ENCODE measurements at regions of chr12 and their contacts with region 1.

Region 1: DNA sequence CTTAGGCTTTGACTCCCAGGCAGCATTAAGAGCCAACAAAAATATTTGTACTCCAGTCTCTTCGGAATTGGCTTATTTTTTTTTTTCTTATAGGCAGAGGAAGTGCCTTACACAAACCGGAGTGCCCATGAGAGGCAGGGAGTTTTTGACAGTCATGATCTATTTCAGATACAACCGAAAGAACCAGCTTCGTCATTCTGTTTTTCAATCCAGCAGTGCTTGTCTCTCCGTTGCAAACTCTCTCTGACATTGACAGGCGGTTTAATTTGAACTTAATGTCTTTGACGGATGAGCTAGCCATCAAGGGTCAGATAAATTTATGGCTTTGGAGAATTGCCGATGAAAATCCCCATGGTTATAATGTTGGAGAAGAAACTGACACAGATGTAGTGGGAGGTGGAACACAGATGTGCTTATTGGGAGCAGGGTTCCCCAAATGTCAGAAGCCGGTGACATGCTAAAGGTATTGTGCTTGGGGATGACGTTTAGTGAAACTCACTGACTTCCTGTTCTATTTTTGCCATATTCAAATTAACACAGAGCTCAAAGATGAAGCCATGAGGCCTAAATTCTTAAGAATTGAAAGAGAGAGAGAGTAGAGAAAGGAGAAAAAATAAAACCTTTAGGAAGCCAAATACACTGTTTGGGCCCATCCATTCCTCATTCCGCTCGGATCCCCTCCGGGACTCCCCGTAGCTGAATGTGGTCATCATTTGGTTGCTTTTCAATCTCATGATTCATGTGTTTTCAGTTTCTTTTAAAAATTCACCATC is 59.7 kb downstream of the PLXNC1 start:
- DNase-seq: peak; percentile 67
- H3K4me3 Mint-ChIP-seq: peak overlapping the region; percentile 70
- H3K27ac Mint-ChIP-seq: peak overlapping the region; percentile 97
- H3K4me1 Mint-ChIP-seq: peaks cover 62% of the 10 kb centered on the region
- H3K27me3 Mint-ChIP-seq: no peaks in the 10 kb centered on the region

Region 2: DNA sequence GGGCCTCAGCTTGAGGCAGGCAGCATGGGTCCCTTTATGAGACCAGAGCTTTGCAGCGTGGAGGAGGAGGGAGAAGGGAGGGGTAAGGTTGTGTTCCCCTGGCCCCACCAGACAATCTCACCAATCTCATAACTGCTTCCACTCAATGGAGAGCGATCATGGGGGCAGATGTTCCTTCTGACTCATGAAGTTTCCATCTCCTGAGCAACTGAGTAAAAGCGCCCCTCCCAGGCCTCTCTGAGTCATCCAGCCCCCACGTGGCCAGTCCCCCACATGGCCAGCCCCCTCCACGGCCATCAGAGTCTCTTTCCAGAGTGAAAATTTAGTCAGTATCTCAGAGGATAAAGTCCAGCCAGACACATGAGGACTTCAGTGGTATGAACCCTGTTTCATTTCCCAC is 98.9 kb before region 1 on chr12:
- CTCF ChIA-PET with region 1: no interaction called
- intact Hi-C with region 1: no loop called
- DNase-seq: peak; percentile 62
- H3K4me3 Mint-ChIP-seq: no peak overlapping the region
- H3K27ac Mint-ChIP-seq: no peak overlapping the region
- H3K4me1 Mint-ChIP-seq: peaks cover 12% of the 10 kb centered on the region
- H3K27me3 Mint-ChIP-seq: no peaks in the 10 kb centered on the region

Region 3: DNA sequence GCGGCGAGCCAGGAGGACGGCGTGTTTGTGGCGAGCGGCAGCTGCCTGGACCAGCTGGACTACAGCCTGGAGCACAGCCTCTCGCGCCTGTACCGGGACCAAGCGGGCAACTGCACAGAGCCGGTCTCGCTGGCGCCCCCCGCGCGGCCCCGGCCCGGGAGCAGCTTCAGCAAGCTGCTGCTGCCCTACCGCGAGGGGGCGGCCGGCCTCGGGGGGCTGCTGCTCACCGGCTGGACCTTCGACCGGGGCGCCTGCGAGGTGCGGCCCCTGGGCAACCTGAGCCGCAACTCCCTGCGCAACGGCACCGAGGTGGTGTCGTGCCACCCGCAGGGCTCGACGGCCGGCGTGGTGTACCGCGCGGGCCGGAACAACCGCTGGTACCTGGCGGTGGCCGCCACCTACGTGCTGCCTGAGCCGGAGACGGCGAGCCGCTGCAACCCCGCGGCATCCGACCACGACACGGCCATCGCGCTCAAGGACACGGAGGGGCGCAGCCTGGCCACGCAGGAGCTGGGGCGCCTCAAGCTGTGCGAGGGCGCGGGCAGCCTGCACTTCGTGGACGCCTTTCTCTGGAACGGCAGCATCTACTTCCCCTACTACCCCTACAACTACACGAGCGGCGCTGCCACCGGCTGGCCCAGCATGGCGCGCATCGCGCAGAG is 58.8 kb before region 1 on chr12:
- CTCF ChIA-PET with region 1: interaction called, 4 read pairs
- intact Hi-C with region 1: loop called (anchors 1 kb)
- DNase-seq: peak; percentile 42
- H3K4me3 Mint-ChIP-seq: peak overlapping the region; percentile 80
- H3K27ac Mint-ChIP-seq: no peak overlapping the region
- H3K4me1 Mint-ChIP-seq: peaks cover 23% of the 10 kb centered on the region
- H3K27me3 Mint-ChIP-seq: peaks cover 9% of the 10 kb centered on the region

Region 4: DNA sequence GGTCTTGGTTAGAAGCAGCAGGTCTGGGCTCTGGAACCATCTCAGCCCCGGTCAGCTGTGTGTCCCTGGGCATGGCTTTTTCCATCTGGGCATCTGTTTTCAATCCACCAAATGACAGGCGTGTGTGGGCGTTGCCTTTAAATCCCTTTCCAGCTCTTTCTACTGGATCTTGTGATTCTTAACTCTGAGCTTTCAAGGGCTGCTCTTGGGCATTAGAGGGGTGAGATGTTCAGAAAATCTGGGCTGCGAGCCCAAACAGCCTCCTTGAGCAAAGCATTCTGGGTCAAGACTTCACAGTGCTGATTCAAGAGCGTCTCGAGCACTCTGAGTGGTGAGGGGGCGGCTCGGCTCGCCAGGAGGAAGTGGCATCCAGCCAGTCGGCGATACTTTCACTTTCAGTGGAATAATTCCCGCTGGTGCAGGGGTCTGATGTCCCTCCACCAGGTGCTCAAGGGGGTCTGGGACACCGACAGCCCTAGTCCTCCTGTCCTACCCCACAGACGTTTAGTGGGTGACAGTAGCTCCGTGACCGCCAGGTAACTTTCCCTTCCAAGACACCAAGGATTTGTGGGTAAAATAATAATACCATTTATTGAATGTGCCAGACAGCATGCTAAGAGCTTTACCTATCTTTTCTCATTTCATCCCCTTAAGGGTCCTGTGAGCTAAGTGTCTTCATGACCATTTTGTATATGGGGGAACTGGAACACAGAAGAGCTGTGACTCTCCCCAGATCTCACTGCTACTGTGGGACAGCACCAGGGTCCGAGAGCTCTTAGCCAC is 54.4 kb after region 1 on chr12:
- CTCF ChIA-PET with region 1: interaction called, 5 read pairs
- intact Hi-C with region 1: loop called (anchors 1 kb)
- DNase-seq: peak; percentile 83
- H3K4me3 Mint-ChIP-seq: peak overlapping the region; percentile 89
- H3K27ac Mint-ChIP-seq: peak overlapping the region; percentile 96
- H3K4me1 Mint-ChIP-seq: peaks cover 31% of the 10 kb centered on the region
- H3K27me3 Mint-ChIP-seq: no peaks in the 10 kb centered on the region

Region 5: DNA sequence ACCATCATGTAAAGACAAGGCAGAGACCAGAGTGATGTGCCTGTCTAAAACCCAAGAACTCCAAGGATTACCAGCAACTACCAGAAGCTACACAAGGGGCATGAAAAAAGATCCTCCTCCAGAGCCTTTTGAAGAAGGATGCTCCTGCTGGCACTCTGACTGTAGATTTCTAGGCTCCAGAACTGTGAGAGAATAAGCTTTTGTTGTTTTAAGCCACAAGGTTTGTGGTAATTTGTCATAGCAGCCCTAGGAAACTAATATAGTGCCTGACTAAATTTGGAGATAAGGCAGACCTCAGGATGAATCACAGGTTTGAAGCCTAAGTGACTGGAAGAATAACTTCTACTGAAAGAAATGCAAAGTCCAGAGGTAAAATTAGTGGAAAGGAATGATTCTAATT is 118.7 kb after region 1 on chr12:
- CTCF ChIA-PET with region 1: no interaction called
- intact Hi-C with region 1: loop called (anchors 1 kb)
- DNase-seq: no peak
- H3K4me3 Mint-ChIP-seq: no peak overlapping the region
- H3K27ac Mint-ChIP-seq: no peak overlapping the region
- H3K4me1 Mint-ChIP-seq: peaks cover 9% of the 10 kb centered on the region
- H3K27me3 Mint-ChIP-seq: no peaks in the 10 kb centered on the region

Region 6: GRCh38 chr12:94459728-94460615 is 251.9 kb after region 1 on chr12 and contains the start of gene CEP83:
- CTCF ChIA-PET with region 1: no interaction called
- intact Hi-C with region 1: loop called (anchors 1 kb)
- DNase-seq: peak; percentile 98
- H3K4me3 Mint-ChIP-seq: peak within 1 kb of the TSS; percentile 97
- H3K27ac Mint-ChIP-seq: peak within 1 kb of the TSS; percentile 91
- H3K4me1 Mint-ChIP-seq: peaks cover 29% of the 10 kb centered on the region
- H3K27me3 Mint-ChIP-seq: peaks cover 5% of the 10 kb centered on the region
- total RNA-seq, gene CEP83: 19.0 to 21.5 TPM

Region 7: DNA sequence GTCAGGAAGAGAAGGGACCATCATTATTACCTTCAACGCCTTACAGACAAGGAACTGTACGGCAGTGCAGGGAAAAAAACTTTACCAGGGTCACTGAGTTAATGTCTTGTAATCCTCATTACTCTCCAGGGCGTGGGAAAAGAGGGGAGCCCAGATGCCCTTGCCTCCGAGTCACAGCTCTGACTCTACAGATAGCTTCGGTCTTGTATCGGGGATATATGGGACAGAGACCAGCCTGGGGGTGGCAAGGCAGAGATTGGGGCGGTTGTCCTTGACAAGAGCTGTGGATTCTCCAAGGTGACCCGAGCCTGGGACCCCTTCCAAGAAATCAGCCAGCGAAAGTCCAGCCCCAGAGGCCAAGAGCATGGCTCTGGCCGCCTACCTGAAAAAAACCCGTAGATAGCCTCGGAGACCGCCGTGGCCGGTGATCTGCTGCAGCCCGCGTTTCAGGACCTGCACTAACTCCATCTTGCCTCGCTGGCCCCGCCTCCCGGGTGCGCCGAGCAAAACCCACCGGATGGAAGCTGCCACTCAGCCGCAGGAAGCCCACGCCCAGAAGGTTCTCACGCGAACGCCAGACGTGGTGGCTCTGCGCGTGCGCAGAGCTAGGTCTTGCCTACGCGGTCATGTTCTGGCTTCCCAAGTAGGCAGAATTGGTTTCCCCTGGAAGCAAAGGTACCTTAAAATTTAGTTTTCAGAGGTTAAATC is 795.3 kb after region 1 on chr12 and contains the start of gene NDUFA12:
- CTCF ChIA-PET with region 1: no interaction called
- intact Hi-C with region 1: loop called (anchors 10 kb)
- DNase-seq: peak; percentile 97
- H3K4me3 Mint-ChIP-seq: peak within 1 kb of the TSS; percentile 89
- H3K27ac Mint-ChIP-seq: peak within 1 kb of the TSS; percentile 86
- H3K4me1 Mint-ChIP-seq: peaks cover 51% of the 10 kb centered on the region
- H3K27me3 Mint-ChIP-seq: no peaks in the 10 kb centered on the region
- total RNA-seq, gene NDUFA12: 147 to 160 TPM